ENCODE measurements at regions of chr1 and their contacts with region 1.

Region 1: GRCh38 chr1:84143796-84144565 is at the start of gene PRKACB:
- DNase-seq: peak; percentile 21
- H3K4me3 Mint-ChIP-seq: peak within 1 kb of the TSS; percentile 89
- H3K27ac Mint-ChIP-seq: peak within 1 kb of the TSS; percentile 98
- H3K4me1 Mint-ChIP-seq: peaks cover 35% of the 10 kb centered on the region
- H3K27me3 Mint-ChIP-seq: no peaks in the 10 kb centered on the region
- total RNA-seq, gene PRKACB: 25.7 to 25.9 TPM

Region 2: GRCh38 chr1:84166797-84167196 is 22.8 kb after region 1 on chr1:
- CTCF ChIA-PET with region 1: interaction called, 5 read pairs
- intact Hi-C with region 1: loop called (anchors 1 kb)
- DNase-seq: no peak
- H3K4me3 Mint-ChIP-seq: no peak overlapping the region
- H3K27ac Mint-ChIP-seq: no peak overlapping the region
- H3K4me1 Mint-ChIP-seq: peaks cover 72% of the 10 kb centered on the region
- H3K27me3 Mint-ChIP-seq: no peaks in the 10 kb centered on the region

Region 3: DNA sequence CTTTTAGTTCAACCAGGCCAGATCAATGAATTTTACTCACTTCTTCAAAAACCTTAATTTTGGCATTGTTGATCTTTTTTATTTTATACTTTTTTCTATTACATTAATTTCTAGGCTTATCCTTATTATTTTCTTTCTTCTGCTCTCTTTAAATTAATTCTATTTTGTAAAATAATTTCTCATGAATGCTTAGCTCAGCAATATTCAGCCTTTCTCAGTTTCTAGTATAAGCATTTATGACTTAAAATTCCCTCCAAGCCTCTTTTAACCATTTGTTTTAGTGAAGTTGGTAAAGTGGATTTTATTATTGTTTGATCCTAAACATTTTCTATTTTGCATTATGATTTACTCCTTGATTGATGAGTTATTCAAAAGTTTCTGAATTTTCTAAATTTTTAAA is 136.9 kb after region 1 on chr1:
- CTCF ChIA-PET with region 1: no interaction called
- intact Hi-C with region 1: no loop called
- DNase-seq: no peak
- H3K4me3 Mint-ChIP-seq: no peak overlapping the region
- H3K27ac Mint-ChIP-seq: no peak overlapping the region
- H3K4me1 Mint-ChIP-seq: no peaks in the 10 kb centered on the region
- H3K27me3 Mint-ChIP-seq: peaks cover 4% of the 10 kb centered on the region

Region 4: GRCh38 chr1:84433258-84434080 is 289.5 kb after region 1 on chr1:
- CTCF ChIA-PET with region 1: interaction called, 168 read pairs
- intact Hi-C with region 1: loop called (anchors 1 kb)
- DNase-seq: peak; percentile 76
- H3K4me3 Mint-ChIP-seq: peak overlapping the region; percentile 63
- H3K27ac Mint-ChIP-seq: peak overlapping the region; percentile 25
- H3K4me1 Mint-ChIP-seq: peaks cover 15% of the 10 kb centered on the region
- H3K27me3 Mint-ChIP-seq: no peaks in the 10 kb centered on the region

Region 5: GRCh38 chr1:84620720-84621313 is 476.8 kb after region 1 on chr1:
- CTCF ChIA-PET with region 1: interaction called, 4 read pairs
- intact Hi-C with region 1: loop called (anchors 1 kb)
- DNase-seq: peak; percentile 85
- H3K4me3 Mint-ChIP-seq: peak overlapping the region; percentile 93
- H3K27ac Mint-ChIP-seq: peak overlapping the region; percentile 94
- H3K4me1 Mint-ChIP-seq: peaks cover 18% of the 10 kb centered on the region
- H3K27me3 Mint-ChIP-seq: no peaks in the 10 kb centered on the region

Region 6: GRCh38 chr1:84853741-84854721 is 710.0 kb after region 1 on chr1:
- CTCF ChIA-PET with region 1: no interaction called
- intact Hi-C with region 1: loop called (anchors 5 kb)
- DNase-seq: peak; percentile 64
- H3K4me3 Mint-ChIP-seq: no peak overlapping the region
- H3K27ac Mint-ChIP-seq: peak overlapping the region; percentile 80
- H3K4me1 Mint-ChIP-seq: peaks cover 35% of the 10 kb centered on the region
- H3K27me3 Mint-ChIP-seq: no peaks in the 10 kb centered on the region

Measured in activated naive CD4-positive, alpha-beta T cell treated with anti-CD3 and anti-CD28 coated beads for 36 hours (primary cell).